ENCODE measurements at regions of chr6 and their contacts with region 1.

Region 1: GRCh38 chr6:132527791-132528190 is 10.3 kb upstream of the TAAR9 start:
- DNase-seq: no peak
- H3K4me3 ChIP-seq: no peak overlapping the region
- H3K27ac ChIP-seq: no peak overlapping the region
- H3K4me1 ChIP-seq: peaks cover 0 to 2% (median 0%) of the 10 kb centered on the region in 4 experiments
- H3K27me3 ChIP-seq: peaks cover 0 to 2% (median 0%) of the 10 kb centered on the region in 5 experiments

Region 2: DNA sequence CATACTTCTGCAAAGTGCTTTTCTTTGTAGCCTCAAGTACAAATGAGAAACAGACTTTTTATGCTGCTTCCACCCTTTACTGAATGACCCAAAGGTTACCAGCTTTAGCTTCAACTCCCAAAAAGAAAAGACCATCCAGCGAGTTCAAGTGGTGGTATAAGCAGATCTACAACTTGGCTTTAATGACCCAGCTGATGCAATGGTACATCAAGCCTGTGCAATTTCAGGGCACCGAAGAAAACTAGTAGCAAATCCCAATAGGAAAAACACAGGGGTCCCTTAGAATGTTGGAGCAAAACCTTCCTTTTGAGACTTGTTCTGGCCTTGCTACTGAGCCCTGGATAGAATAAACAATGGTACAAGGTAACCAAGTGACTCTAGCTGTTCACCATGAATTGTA is 48.7 kb before region 1 on chr6:
- CTCF ChIA-PET with region 1: no interaction called
- POLR2A ChIA-PET with region 1: no interaction called
- DNase-seq: no peak
- H3K4me3 ChIP-seq: no peak overlapping the region
- H3K27ac ChIP-seq: no peak overlapping the region
- H3K4me1 ChIP-seq: peaks cover 4 to 14% (median 7%) of the 10 kb centered on the region in 4 experiments
- H3K27me3 ChIP-seq: no peaks in the 10 kb centered on the region

Region 3: DNA sequence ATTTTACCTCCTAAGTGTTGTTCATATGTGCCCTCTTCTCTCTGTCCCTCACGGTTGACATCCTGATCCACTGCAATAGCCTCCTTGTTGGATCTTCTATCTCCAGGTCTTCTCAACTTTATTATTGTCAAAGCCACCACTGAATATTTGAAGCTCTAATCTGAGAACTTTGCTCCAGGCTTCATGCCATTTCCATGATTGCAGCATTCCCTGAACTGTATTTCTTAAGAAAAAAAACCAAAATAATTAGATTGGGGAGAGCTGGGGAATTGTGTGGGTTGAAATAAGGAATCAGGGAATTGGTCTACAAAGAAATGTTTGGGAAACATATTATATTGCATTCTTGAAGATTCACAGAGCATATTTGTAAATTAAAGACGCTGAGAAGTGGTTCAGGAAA is 12.4 kb before region 1 on chr6:
- CTCF ChIA-PET with region 1: interaction called, 18 read pairs
- POLR2A ChIA-PET with region 1: no interaction called
- DNase-seq: no peak
- H3K4me3 ChIP-seq: no peak overlapping the region
- H3K27ac ChIP-seq: no peak overlapping the region
- H3K4me1 ChIP-seq: peaks cover 15 to 27% (median 20%) of the 10 kb centered on the region in 4 experiments
- H3K27me3 ChIP-seq: no peaks in the 10 kb centered on the region

Region 4: DNA sequence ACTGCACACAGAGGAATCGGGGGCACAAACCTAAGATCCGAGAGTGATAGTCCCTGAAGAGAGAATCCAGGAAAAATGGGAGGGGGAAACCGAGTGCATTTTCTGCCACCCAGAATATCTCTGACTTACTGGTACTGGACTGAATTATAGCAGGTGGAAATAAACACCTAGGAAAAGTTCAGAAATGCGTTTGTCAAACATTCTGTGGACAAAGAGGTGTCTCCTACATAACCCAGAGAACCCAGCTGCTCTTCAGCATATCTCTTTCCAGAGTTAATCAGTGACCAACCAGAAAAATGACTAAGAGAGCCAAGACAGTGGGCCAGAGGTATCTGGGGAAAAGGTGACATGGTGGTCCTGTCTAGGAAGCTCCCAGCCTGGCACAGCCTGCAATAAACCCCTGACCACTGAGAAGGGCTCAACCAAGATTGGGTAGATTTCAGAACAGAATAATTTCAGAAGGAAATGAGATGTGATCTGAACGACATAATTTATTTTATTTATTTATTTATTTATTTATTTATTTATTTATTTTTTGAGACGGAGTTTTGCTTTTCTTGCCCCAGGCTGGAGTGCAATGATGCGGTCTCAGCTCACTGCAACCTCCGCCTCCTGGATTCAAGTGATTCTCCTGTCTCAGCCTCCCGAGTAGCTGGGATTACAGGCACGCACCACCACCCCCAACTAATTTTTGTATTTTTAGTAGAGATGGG is 192.1 kb after region 1 on chr6:
- CTCF ChIA-PET with region 1: no interaction called
- POLR2A ChIA-PET with region 1: no interaction called
- DNase-seq: no peak
- H3K4me3 ChIP-seq: no peak overlapping the region
- H3K27ac ChIP-seq: no peak overlapping the region
- H3K4me1 ChIP-seq: peaks cover 10 to 22% (median 14%) of the 10 kb centered on the region in 4 experiments
- H3K27me3 ChIP-seq: no peaks in the 10 kb centered on the region

Measured in common myeloid progenitor, CD34-positive (primary cell).